Gastrocnemius medialis (tissue), 4 donors: ENCODE measurements at regions of chr1 and their contacts with region 1.

Region 1: GRCh38 chr1:181014477-181015250 is 8.0 kb downstream of the STX6 start:
- DNase-seq: no peak
- ATAC-seq: no peak
- H3K4me3 ChIP-seq: no peak overlapping the region
- H3K27ac ChIP-seq: no peak overlapping the region
- H3K4me1 ChIP-seq: peaks cover 7 to 11% of the 10 kb centered on the region in 2 donors
- H3K27me3 ChIP-seq: no peaks in the 10 kb centered on the region
- CTCF ChIP-seq: no peak
- POLR2A ChIP-seq: no peak

Region 2: GRCh38 chr1:180881806-180882509 is 132.7 kb before region 1 on chr1:
- in situ Hi-C with region 1: no loop called
- intact Hi-C with region 1: loop called (anchors 10 kb)
- DNase-seq: no peak
- ATAC-seq: peak in 1 of 2 donors; percentile 56
- H3K4me3 ChIP-seq: no peak overlapping the region
- H3K27ac ChIP-seq: no peak overlapping the region
- H3K4me1 ChIP-seq: peaks cover 0 to 6% of the 10 kb centered on the region in 2 donors
- H3K27me3 ChIP-seq: no peaks in the 10 kb centered on the region
- CTCF ChIP-seq: peak; percentile 22 to 50 (median 39)
- POLR2A ChIP-seq: no peak

Region 3: GRCh38 chr1:180926164-180926981 is 88.3 kb before region 1 on chr1:
- in situ Hi-C with region 1: no loop called
- intact Hi-C with region 1: no loop called
- DNase-seq: peak in 1 of 2 donors; percentile 43
- ATAC-seq: peak; percentile 35 to 64
- H3K4me3 ChIP-seq: peak overlapping the region in 3 of 4 donors; percentile 9 to 36 (median 20)
- H3K27ac ChIP-seq: peak overlapping the region in 3 of 4 donors; percentile 8 to 37 (median 11)
- H3K4me1 ChIP-seq: peaks cover 20 to 23% of the 10 kb centered on the region in 2 donors
- H3K27me3 ChIP-seq: no peaks in the 10 kb centered on the region
- CTCF ChIP-seq: no peak
- POLR2A ChIP-seq: no peak

Region 4: DNA sequence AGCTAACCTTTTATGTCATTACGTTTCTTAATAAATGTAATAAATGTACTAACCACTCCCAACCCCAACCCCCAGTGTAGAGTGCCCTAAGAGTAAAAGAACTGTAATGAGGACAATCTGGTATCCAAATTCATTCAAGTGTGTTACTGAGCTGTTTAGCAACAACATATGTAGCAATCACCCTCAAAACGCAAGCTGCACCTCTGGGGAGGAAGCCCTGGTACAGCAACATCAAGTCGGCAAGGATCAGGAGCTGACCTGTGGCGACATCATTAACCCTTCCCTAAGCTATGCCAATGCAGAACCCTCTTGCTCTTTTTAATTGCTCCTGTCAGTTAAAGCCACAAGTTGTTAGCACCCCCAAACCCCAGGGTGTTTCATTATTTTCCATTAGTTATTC is 39.1 kb before region 1 on chr1:
- in situ Hi-C with region 1: no loop called
- intact Hi-C with region 1: loop called (anchors 5 kb)
- DNase-seq: no peak
- ATAC-seq: no peak
- H3K4me3 ChIP-seq: no peak overlapping the region
- H3K27ac ChIP-seq: no peak overlapping the region
- H3K4me1 ChIP-seq: peaks cover 8 to 15% of the 10 kb centered on the region in 2 donors
- H3K27me3 ChIP-seq: no peaks in the 10 kb centered on the region
- CTCF ChIP-seq: no peak
- POLR2A ChIP-seq: no peak